ENCODE measurements at regions of chr2 and their contacts with region 1.

Region 1: DNA sequence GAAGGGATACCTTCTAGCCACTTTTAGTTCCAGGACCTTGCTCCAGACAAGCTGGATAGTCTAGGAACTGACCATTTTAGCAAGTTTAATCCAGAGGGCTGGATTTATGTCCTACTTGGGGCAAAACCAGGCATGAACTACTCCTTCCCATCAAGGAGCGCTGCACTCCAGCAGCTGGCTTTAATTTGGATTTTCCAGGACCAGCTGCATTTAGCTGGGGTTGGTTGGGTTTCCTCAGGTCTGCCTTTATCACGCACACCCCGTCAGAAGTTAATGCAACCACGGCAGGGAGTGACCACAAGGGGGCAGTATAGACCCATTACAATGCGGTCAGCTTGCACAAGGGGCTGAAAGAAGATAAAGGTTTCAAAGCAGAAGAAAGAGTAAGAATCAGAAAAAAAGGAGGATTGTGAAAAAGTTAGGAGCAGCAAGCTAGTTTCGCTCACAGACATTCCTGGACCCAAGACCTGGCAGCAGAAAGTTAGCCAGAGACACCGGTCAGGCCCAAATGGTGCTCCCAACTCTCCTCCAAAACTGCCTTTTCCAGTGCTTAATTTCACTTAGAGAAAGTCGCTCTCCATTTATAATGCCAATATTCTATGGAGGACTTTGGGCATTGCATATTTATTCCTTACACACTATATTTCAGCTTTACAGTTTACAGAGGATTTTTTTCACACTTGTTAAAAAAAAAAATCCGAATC is 40.1 kb downstream of the SLC4A1AP start:
- DNase-seq: peak; percentile 89
- H3K4me3 Mint-ChIP-seq: no peak overlapping the region
- H3K27ac Mint-ChIP-seq: no peak overlapping the region
- H3K4me1 Mint-ChIP-seq: peaks cover 31% of the 10 kb centered on the region
- H3K27me3 Mint-ChIP-seq: no peaks in the 10 kb centered on the region

Region 2: DNA sequence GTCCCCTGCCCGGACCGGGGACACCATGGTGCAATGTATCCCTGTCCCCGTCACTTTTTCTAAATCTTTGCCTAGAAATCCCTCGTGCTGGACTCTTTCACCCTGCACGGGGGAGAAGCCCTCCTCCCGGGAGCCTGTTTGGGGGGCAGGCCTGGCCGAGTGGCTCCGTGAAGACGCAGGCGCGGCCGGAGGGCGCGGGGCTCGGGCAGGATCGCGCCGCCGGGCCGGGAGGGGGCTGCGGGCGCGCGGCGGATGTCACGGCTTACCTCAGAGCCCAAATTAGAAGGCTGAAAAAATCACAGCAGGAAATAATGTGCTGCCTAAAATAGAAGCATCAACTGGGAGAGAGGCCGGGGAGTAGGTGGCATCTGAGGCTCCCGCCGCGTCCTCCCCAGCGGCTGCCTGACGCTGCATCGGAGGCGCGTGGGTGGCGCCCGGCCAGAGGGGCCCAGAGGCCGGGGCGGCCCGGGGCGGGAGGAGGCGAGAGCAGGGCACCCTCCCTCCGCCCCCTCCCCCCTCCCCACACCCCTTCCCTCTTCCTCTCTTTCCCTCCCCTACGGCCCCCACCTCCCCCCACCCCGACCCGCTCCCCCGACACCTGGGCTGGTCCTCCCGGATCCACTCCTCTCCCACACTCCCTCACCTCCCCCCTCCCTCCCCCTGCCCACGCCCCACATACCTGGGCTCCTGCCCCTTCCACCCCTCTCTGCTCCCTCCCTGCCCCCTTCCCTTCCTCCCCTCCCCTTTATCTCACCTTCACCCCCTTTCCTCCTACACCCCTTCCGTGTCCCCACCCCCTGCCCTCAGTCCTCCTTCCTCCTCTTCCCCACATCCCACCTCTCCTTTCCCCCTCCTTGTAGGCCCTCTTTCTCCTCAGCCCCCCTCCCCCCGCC is 11.8 kb after region 1 on chr2:
- CTCF ChIA-PET with region 1: interaction called, 22 read pairs
- POLR2A ChIA-PET with region 1: interaction called, 3 read pairs
- DNase-seq: peak; percentile 50
- H3K4me3 Mint-ChIP-seq: peak overlapping the region; percentile 43
- H3K27ac Mint-ChIP-seq: no peak overlapping the region
- H3K4me1 Mint-ChIP-seq: peaks cover 47% of the 10 kb centered on the region
- H3K27me3 Mint-ChIP-seq: peaks cover 9% of the 10 kb centered on the region

Region 3: GRCh38 chr2:27723372-27724144 is 19.8 kb after region 1 on chr2:
- CTCF ChIA-PET with region 1: interaction called, 25 read pairs
- POLR2A ChIA-PET with region 1: no interaction called
- DNase-seq: peak; percentile 35
- H3K4me3 Mint-ChIP-seq: no peak overlapping the region
- H3K27ac Mint-ChIP-seq: no peak overlapping the region
- H3K4me1 Mint-ChIP-seq: peaks cover 34% of the 10 kb centered on the region
- H3K27me3 Mint-ChIP-seq: no peaks in the 10 kb centered on the region